Heart left ventricle (tissue), 16 donors: ENCODE measurements at regions of chr4 and their contacts with region 1.

Region 1: DNA sequence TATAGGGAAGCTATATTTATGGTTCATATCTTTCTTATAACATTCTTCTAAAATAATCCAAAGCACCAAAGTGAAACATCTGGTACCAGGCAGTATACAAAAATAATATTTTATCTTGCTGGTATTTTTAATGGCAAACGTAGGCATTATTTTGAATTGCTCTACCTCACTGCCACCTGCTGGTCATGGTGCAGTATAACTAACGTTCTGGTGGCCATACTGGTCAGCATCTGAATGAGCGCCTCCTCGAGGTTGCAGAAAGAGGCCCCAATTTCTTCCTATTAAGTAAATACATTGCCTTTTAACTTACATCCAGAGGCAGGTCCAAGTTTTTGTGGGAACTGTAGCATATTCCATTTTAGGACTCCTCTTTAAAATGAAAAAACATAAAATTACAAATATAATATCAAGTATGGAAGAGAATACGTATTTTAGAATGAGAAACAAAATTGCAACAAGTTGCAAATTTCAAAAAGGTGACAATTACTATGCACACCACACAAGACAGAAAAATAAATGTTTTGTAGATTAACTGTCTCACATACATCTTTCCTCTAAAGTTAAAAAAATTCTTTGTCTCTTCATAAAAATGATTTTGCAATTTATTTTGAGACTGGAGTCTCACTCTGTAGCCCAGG is 22.9 kb upstream of the CWH43 start:
- DNase-seq: peak in 4 of 5 donors; percentile 49 to 70 (median 68)
- ATAC-seq: peak in 3 of 4 donors; percentile 77 to 89 (median 82)
- H3K4me3 ChIP-seq: no peak overlapping the region
- H3K27ac ChIP-seq: no peak overlapping the region
- H3K4me1 ChIP-seq: no peaks in the 10 kb centered on the region
- H3K27me3 ChIP-seq: no peaks in the 10 kb centered on the region
- CTCF ChIP-seq: peak; percentile 90 to 99 (median 95)
- POLR2A ChIP-seq: no peak

Region 2: GRCh38 chr4:48439988-48440387 is 523.2 kb before region 1 on chr4:
- intact Hi-C with region 1: loop called in 8 of 10 experiments (anchors 5 to 10 kb)
- DNase-seq: peak in 2 of 5 donors; percentile 13 to 26
- ATAC-seq: peak in 1 of 4 donors; percentile 42
- H3K4me3 ChIP-seq: no peak overlapping the region
- H3K27ac ChIP-seq: no peak overlapping the region
- H3K4me1 ChIP-seq: peaks cover 0 to 10% (median 0%) of the 10 kb centered on the region in 12 donors
- H3K27me3 ChIP-seq: no peaks in the 10 kb centered on the region
- CTCF ChIP-seq: no peak
- POLR2A ChIP-seq: no peak

Region 3: DNA sequence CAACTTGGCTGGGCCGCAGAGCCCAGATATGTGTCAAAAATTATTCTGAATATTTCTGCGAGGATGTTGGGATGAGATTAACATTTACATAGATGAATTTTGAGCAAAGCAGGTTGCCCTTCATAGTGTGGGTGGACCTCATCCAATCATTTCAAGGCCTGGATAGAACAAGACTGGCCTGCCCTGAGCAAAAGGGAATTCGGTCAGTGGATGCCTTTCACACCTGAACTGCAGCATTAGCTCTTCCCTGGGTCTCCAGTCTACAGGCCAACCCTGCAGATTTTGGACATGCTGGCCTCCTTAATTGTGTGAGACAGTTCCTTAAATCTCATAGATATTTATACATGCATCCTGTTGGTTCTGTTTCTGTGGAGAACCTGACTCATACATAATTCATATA is 512.4 kb before region 1 on chr4:
- intact Hi-C with region 1: loop called in 8 of 10 experiments (anchors 5 to 10 kb)
- DNase-seq: no peak
- ATAC-seq: no peak
- H3K4me3 ChIP-seq: no peak overlapping the region
- H3K27ac ChIP-seq: no peak overlapping the region
- H3K4me1 ChIP-seq: no peaks in the 10 kb centered on the region
- H3K27me3 ChIP-seq: no peaks in the 10 kb centered on the region
- CTCF ChIP-seq: no peak
- POLR2A ChIP-seq: no peak

Region 4: DNA sequence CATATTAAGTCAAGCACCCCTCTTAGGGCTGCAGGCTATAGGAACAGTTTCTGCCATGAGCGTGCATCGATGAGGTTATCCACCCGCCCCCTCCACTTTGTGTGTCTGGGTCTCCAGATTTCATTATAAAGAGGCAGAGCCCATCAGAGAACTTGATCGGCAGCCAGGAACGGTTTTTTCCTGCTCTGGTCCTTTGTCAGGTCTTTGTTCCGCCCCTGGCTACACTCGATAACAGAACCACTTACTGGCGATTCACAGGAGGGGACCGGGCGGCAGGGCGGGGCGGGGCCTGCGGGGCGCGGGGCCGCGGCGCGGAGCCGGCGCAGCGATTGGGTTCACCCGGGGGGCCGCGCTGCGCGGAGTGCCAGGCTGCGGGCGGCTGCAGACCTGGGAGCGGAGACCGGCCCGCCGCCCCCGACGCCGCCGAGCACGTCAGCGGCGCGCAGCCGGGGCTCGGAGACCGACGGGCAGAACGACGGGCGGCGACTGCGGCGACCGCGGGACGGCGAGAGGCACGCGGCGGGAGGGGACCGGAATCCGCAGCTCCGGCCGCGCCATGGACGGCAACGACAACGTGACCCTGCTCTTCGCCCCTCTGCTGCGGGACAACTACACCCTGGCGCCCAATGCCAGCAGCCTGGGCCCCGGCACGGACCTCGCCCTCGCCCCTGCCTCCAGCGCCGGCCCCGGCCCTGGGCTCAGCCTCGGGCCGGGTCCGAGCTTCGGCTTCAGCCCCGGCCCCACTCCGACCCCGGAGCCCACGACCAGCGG is 480.0 kb before region 1 on chr4 and contains the start of gene SLC10A4:
- intact Hi-C with region 1: no loop called
- DNase-seq: peak in 1 of 5 donors; percentile 28
- ATAC-seq: peak in 2 of 4 donors; percentile 31 to 38
- H3K4me3 ChIP-seq: peak within 1 kb of the TSS; percentile 8 to 53 (median 44)
- H3K27ac ChIP-seq: no peak within 1 kb of the TSS
- H3K4me1 ChIP-seq: peaks cover 0 to 16% (median 0%) of the 10 kb centered on the region in 12 donors
- H3K27me3 ChIP-seq: peaks cover 13 to 78% (median 41%) of the 10 kb centered on the region in 9 donors
- CTCF ChIP-seq: no peak
- POLR2A ChIP-seq: no peak
- total RNA-seq, gene SLC10A4: 0.16 to 0.45 (median 0.37) TPM in 6 of 9 donors, not detected in the others

Region 5: GRCh38 chr4:48687313-48688051 is 275.7 kb before region 1 on chr4:
- intact Hi-C with region 1: loop called in 3 of 10 experiments (anchors 5 to 10 kb)
- DNase-seq: no peak
- ATAC-seq: no peak
- H3K4me3 ChIP-seq: no peak overlapping the region
- H3K27ac ChIP-seq: no peak overlapping the region
- H3K4me1 ChIP-seq: peaks cover 0 to 46% (median 9%) of the 10 kb centered on the region in 12 donors
- H3K27me3 ChIP-seq: no peaks in the 10 kb centered on the region
- CTCF ChIP-seq: no peak
- POLR2A ChIP-seq: no peak

Region 6: DNA sequence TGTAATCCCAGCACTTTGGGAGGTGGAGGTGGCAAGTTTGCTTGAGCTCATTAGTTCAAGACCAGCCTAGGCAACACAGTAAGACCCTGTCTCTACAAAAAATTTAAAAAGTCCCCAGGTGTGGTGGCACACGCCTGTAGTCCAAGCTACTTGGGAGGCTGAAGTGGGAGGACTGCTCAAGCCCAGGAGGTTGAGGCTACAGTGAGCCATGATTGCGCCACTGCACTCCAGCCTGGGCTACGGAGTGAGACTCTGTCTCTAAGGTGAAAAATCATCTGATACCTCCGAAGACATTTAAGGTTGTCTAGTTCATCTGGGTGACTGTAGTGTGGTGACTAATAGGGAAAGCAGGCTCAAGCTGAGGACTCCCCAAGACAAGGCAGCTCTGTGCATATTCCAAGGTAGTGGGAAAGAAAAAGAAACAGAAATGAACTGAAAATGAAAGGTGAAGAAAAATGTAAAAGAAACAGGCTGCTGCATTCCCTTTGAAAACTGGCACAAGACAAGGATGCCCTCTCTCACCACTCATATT is 206.4 kb before region 1 on chr4:
- intact Hi-C with region 1: no loop called
- DNase-seq: no peak
- ATAC-seq: no peak
- H3K4me3 ChIP-seq: no peak overlapping the region
- H3K27ac ChIP-seq: peak overlapping the region in 1 of 12 donors; percentile 21
- H3K4me1 ChIP-seq: peaks cover 0 to 52% (median 27%) of the 10 kb centered on the region in 12 donors
- H3K27me3 ChIP-seq: no peaks in the 10 kb centered on the region
- CTCF ChIP-seq: no peak
- POLR2A ChIP-seq: no peak

Region 7: GRCh38 chr4:48830706-48831531 is 132.2 kb before region 1 on chr4 and contains the start of gene OCIAD1:
- intact Hi-C with region 1: no loop called
- DNase-seq: peak; percentile 96 to 99 (median 98)
- ATAC-seq: peak; percentile 100
- H3K4me3 ChIP-seq: peak within 1 kb of the TSS; percentile 68 to 96 (median 80)
- H3K27ac ChIP-seq: peak within 1 kb of the TSS; percentile 88 to 97 (median 95)
- H3K4me1 ChIP-seq: peaks cover 0 to 26% (median 16%) of the 10 kb centered on the region in 12 donors
- H3K27me3 ChIP-seq: no peaks in the 10 kb centered on the region
- CTCF ChIP-seq: no peak
- POLR2A ChIP-seq: peak in 1 of 2 donors; percentile 65
- total RNA-seq, gene OCIAD1: 102 to 175 (median 137) TPM

Region 8: DNA sequence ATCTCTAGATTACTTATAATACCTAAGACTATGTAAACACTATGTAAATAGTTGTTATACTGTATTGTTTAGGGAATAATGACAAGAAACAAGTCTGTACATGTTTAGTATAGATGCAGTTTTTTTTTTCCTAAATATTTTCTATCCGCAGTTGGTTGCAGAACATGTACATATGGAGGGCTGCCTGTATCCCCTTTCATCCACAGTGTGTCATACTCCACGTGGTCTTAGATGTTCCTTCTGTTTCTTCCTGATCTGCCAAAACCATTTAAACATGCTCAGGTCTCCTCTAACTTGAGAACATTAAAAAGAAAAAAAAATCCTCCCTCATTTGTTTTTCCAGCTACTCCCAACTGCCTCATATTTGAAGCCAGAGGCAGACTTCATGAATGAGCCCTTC is 118.3 kb before region 1 on chr4:
- intact Hi-C with region 1: loop called in 1 of 10 experiments (anchors 10 kb)
- DNase-seq: no peak
- ATAC-seq: no peak
- H3K4me3 ChIP-seq: no peak overlapping the region
- H3K27ac ChIP-seq: no peak overlapping the region
- H3K4me1 ChIP-seq: peaks cover 0 to 6% (median 0%) of the 10 kb centered on the region in 12 donors
- H3K27me3 ChIP-seq: no peaks in the 10 kb centered on the region
- CTCF ChIP-seq: no peak
- POLR2A ChIP-seq: no peak